Right cardiac atrium (tissue), 5 donors: ENCODE measurements at regions of chr3 and their contacts with region 1.

Region 1: DNA sequence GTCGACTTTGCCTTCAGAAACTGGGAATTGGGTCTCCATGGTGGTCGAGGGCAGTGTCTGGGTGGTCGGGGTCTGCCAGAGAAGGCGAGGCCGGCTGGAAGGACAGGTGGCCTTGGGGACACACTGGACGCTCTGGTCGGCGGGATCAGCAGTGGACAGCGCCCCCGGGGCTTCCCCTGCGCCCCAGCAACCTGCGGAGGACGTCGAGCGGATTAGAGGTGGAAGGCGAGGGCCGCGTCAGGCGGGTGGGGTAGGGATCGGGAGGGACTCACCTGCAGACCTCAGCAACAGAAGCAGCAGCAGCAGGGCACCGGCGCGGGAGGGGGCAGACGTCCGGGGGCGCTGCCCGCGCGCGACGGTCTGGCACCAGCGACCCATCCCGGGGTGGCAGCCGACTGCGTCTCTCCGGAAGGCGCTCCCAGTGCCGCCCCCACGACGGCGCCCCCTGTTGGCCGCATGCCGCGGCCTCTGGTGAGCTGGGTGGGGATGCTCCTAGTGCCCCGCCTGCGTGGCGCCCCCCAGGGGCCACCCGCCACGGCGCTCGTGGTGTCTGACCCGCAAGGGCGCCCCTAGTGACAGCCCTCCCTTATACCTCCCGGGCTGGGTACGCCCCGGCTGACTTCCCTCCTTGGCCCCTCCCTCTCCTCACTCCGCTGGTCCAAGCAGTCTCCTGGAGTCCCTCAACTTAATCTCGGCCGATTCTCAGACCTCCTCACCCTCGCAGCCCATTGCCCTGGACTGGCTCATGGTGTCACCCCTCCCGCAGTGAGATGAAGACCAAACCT is at the start of gene PRSS50:
- DNase-seq: peak in 1 of 3 donors; percentile 60
- ATAC-seq: peak in 1 of 2 donors; percentile 11
- H3K4me3 ChIP-seq: no peak within 1 kb of the TSS
- H3K27ac ChIP-seq: no peak within 1 kb of the TSS
- H3K4me1 ChIP-seq: no peaks in the 10 kb centered on the region
- H3K27me3 ChIP-seq: no peaks in the 10 kb centered on the region
- total RNA-seq, gene PRSS50: 0.12 to 0.31 TPM in 2 of 4 donors, not detected in the others

Region 2: GRCh38 chr3:46829699-46830208 is 112.1 kb after region 1 on chr3:
- intact Hi-C with region 1: loop called in 1 of 4 experiments (anchors 10 kb)
- DNase-seq: no peak
- ATAC-seq: no peak
- H3K4me3 ChIP-seq: no peak overlapping the region
- H3K27ac ChIP-seq: no peak overlapping the region
- H3K4me1 ChIP-seq: no peaks in the 10 kb centered on the region
- H3K27me3 ChIP-seq: no peaks in the 10 kb centered on the region